ENCODE measurements at regions of chr17 and their contacts with region 1.

Region 1: GRCh38 chr17:39730095-39730921 is at the start of gene MIEN1:
- H3K4me3 ChIP-seq: peak within 1 kb of the TSS; percentile 90
- H3K27ac ChIP-seq: peak within 1 kb of the TSS; percentile 61; the same call in 1 of the 2 replicates
- H3K4me1 ChIP-seq: 0 out of 2 replicates have a peak, but pooled peaks cover 3% of the 10 kb centered on the region
- CTCF ChIP-seq: peak; percentile 93

Region 2: GRCh38 chr17:39699818-39700147 is 30.5 kb before region 1 on chr17 and contains the start of gene ERBB2:
- CTCF ChIA-PET with region 1: interaction called, 22 read pairs
- POLR2A ChIA-PET with region 1: interaction called, 39 read pairs
- H3K4me3 ChIP-seq: peak within 1 kb of the TSS; percentile 81
- H3K27ac ChIP-seq: peak within 1 kb of the TSS; percentile 68; the same call in 1 of the 2 replicates
- H3K4me1 ChIP-seq: peaks cover 13% of the 10 kb centered on the region; the same call in 1 of the 2 replicates
- CTCF ChIP-seq: no peak

Region 3: DNA sequence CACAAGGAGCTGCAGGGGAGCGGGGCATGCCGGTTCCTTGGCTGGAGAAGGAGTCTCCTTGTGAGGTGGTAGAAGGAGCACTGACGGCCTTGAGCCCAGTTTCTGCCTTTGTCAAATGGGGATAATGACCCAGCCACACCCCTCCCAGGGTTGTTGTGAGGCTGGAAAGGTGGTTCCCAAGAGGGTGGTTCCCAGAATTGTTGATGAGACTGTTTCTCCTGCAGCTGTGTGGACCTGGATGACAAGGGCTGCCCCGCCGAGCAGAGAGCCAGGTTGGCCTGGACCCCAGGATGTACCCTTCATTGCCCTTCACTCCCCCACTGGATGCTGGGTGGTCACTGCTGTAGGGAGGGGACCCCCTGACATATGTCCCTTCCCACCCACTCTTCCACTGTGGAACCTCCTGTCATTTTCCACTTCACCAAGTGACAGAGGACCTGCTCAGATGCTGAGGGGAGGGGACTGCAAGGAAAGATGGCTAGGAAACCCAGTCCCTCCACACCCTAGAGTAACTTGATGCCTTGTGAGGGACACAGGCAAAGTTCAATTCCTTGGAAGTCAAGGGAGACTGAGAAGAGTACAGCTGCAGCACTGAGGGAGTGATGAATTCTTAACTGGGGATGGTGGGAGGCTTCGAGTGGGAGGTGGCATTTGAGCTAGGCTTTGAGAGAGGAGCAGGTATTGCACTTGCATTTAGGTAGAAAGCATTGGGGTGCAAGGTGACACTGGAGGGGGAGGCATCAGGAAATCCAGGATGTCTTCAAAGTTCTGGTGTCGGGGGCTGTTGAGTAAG is 10.5 kb before region 1 on chr17:
- CTCF ChIA-PET with region 1: interaction called, 6 read pairs
- POLR2A ChIA-PET with region 1: interaction called, 10 read pairs
- H3K4me3 ChIP-seq: no peak overlapping the region
- H3K27ac ChIP-seq: no peak overlapping the region
- H3K4me1 ChIP-seq: no peaks in the 10 kb centered on the region
- CTCF ChIP-seq: no peak

Region 4: GRCh38 chr17:39754161-39754951 is 24.0 kb after region 1 on chr17:
- CTCF ChIA-PET with region 1: interaction called, 26 read pairs
- POLR2A ChIA-PET with region 1: interaction called, 4 read pairs
- H3K4me3 ChIP-seq: peak overlapping the region; percentile 50
- H3K27ac ChIP-seq: peak overlapping the region; percentile 87
- H3K4me1 ChIP-seq: peaks cover 4% of the 10 kb centered on the region; the same call in 1 of the 2 replicates
- CTCF ChIP-seq: peak; percentile 95